ENCODE measurements at regions of chr12 and their contacts with region 1.

Region 1: GRCh38 chr12:130838951-130839769 is at the start of gene STX2:
- DNase-seq: peak; percentile 94
- ATAC-seq: peak; percentile 98
- total RNA-seq, gene STX2: 15.9 TPM

Region 2: GRCh38 chr12:130871286-130872178 is 32.4 kb after region 1 on chr12 and contains the start of gene RAN:
- intact Hi-C with region 1: loop called (anchors 2 kb)
- DNase-seq: peak; percentile 96
- ATAC-seq: peak; percentile 94
- total RNA-seq, gene RAN: 253 TPM

Measured in Right ventricle myocardium inferior (tissue), 1 donor.